GM12878 (cell line): ENCODE measurements at regions of chr14 and their contacts with region 1.

Region 1: DNA sequence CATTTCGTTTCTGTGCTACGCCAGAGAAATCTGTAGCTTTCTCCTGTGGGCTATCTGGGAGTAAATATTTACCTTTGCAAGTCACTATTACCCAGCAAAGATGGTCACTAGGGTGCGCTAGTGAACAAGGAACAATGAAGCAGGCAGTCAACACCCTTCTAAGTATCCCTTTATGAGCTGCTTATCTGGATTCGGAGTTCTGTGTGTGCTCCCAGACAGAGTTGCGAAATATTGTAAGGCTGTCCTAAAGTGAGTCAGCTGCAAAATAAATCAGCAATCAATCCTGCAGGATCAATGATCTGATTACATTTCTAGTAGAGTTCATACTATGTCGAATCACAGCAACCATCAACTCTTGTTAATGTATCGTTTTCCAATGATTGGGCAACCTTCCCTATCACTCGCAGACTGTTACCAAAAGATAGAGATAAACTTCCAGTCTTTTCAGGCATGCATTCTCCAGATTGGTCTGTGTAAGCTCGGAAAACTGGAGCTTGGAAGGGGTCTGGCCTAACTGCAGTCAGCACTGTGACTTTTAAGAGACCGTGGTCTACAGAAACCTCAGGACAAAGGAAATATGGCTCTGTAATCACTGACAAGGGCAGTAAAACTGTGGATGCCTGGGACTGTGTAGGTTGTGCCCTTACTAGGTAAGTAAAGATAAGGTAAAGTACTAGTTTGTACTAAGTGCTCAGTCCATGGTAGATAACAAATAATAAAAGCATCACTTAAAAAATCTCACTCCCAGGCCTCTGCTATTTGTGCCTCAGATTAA is 133.5 kb downstream of the KCNK10 start:
- DNase-seq: peak; percentile 25
- ATAC-seq: peak; percentile 96
- H3K4me3 ChIP-seq: no peak overlapping the region
- H3K27ac ChIP-seq: no peak overlapping the region
- H3K4me1 ChIP-seq: peaks cover 10% of the 10 kb centered on the region; the same call in 1 of the 2 replicates
- H3K27me3 ChIP-seq: no peaks in the 10 kb centered on the region; a peak in 1 of 4 replicates
- CTCF ChIP-seq: peak; percentile 64 to 75 (median 69)
- EP300 ChIP-seq: no peak
- POLR2A ChIP-seq: no peak
- RAD21 ChIP-seq: peak; percentile 82

Region 2: DNA sequence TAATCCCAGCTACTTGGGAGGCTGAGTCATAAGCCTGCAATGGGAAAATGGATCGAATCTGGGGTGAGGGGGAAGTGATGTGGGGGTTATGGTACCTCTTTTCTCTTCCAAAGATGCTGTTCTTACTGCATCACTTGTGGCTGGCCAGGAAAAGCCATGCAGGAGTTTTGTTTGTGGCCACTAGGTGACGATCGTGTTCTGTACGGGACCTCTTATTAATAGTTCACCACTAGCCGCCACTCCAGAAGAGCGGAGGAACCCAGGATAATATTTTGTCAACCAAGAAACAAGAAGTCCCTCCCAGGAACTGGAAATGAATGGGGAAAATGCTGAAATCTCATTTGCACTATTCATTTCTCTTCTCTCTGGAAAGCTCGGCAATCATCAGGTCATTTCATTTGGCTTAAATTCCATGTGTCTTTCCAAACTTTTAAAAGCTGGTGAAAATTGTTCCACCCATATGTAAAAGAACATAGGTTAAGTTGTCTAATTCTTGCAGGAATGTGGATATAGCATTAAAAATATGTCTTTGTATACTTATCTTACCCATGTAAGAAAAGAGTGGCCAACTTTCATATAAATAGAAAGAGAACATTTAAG is 175.8 kb before region 1 on chr14:
- CTCF ChIA-PET with region 1: interaction called, 48 read pairs
- POLR2A ChIA-PET with region 1: no interaction called
- RAD21 ChIA-PET with region 1: interaction called, 16 read pairs
- SMC1A ChIA-PET with region 1: interaction called, 28 read pairs
- in situ Hi-C with region 1: no loop called
- intact Hi-C with region 1: no loop called
- DNase-seq: no peak
- ATAC-seq: peak; percentile 79
- H3K4me3 ChIP-seq: no peak overlapping the region
- H3K27ac ChIP-seq: no peak overlapping the region
- H3K4me1 ChIP-seq: no peaks in the 10 kb centered on the region
- H3K27me3 ChIP-seq: no peaks in the 10 kb centered on the region
- CTCF ChIP-seq: peak; percentile 88 to 96 (median 91); a peak in 5 of 6 replicates
- EP300 ChIP-seq: no peak
- POLR2A ChIP-seq: no peak
- RAD21 ChIP-seq: peak; percentile 79

Region 3: GRCh38 chr14:88209273-88209672 is 19.7 kb after region 1 on chr14:
- CTCF ChIA-PET with region 1: interaction called, 12 read pairs
- POLR2A ChIA-PET with region 1: no interaction called
- RAD21 ChIA-PET with region 1: no interaction called
- SMC1A ChIA-PET with region 1: no interaction called
- in situ Hi-C with region 1: no loop called
- intact Hi-C with region 1: no loop called
- DNase-seq: no peak
- ATAC-seq: no peak
- H3K4me3 ChIP-seq: no peak overlapping the region
- H3K27ac ChIP-seq: no peak overlapping the region
- H3K4me1 ChIP-seq: no peaks in the 10 kb centered on the region
- H3K27me3 ChIP-seq: no peaks in the 10 kb centered on the region
- CTCF ChIP-seq: no peak
- EP300 ChIP-seq: no peak
- POLR2A ChIP-seq: no peak
- RAD21 ChIP-seq: no peak

Region 4: GRCh38 chr14:88289234-88289633 is 99.6 kb after region 1 on chr14:
- CTCF ChIA-PET with region 1: no interaction called
- POLR2A ChIA-PET with region 1: no interaction called
- RAD21 ChIA-PET with region 1: no interaction called
- SMC1A ChIA-PET with region 1: no interaction called
- in situ Hi-C with region 1: no loop called
- intact Hi-C with region 1: no loop called
- DNase-seq: no peak
- ATAC-seq: no peak
- H3K4me3 ChIP-seq: no peak overlapping the region
- H3K27ac ChIP-seq: no peak overlapping the region
- H3K4me1 ChIP-seq: no peaks in the 10 kb centered on the region
- H3K27me3 ChIP-seq: no peaks in the 10 kb centered on the region; a peak in 1 of 4 replicates
- CTCF ChIP-seq: no peak
- EP300 ChIP-seq: no peak
- POLR2A ChIP-seq: no peak
- RAD21 ChIP-seq: no peak

Region 5: GRCh38 chr14:88380405-88380804 is 190.8 kb after region 1 on chr14:
- CTCF ChIA-PET with region 1: interaction called, 75 read pairs
- POLR2A ChIA-PET with region 1: no interaction called
- RAD21 ChIA-PET with region 1: interaction called, 24 read pairs
- SMC1A ChIA-PET with region 1: interaction called, 35 read pairs
- in situ Hi-C with region 1: no loop called
- intact Hi-C with region 1: loop called (anchors 5 kb)
- DNase-seq: no peak
- ATAC-seq: no peak
- H3K4me3 ChIP-seq: no peak overlapping the region
- H3K27ac ChIP-seq: no peak overlapping the region
- H3K4me1 ChIP-seq: no peaks in the 10 kb centered on the region
- H3K27me3 ChIP-seq: no peaks in the 10 kb centered on the region; a peak in 1 of 4 replicates
- CTCF ChIP-seq: peak in 2 of 3 experiments; percentile 8 to 39; a peak in 2 of 6 replicates
- EP300 ChIP-seq: no peak
- POLR2A ChIP-seq: no peak
- RAD21 ChIP-seq: peak; percentile 36; the same call in 1 of the 2 replicates